ENCODE measurements at regions of chr5 and their contacts with region 1.

Region 1: DNA sequence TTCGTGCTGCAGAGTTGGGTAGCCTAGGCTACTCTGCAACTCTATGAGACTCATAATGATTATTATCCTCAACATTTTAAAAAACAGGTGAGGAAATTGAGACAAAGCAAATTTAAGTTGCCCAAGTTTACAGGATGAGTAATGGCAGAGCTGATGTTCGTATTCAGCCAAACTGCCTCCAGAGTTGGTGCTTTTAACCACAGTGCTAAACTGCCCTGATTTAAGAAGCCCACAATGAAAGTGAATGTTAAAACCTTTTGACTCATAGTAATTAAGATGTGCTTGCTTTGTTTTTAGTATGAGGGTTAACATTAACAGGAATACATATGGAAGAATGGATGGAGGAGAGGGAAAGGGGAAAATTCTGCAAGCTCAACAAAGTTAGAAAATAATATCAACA is 15.9 kb upstream of the GABRB2 start:
- DNase-seq: no peak

Region 2: GRCh38 chr5:160852049-160852448 is 710.4 kb before region 1 on chr5 and contains the start of gene ATP10B:
- intact Hi-C with region 1: loop called in 1 of 2 experiments (anchors 10 kb)
- DNase-seq: no peak
- total RNA-seq, gene ATP10B: not detected

Region 3: GRCh38 chr5:161544350-161544765 is 18.1 kb before region 1 on chr5:
- intact Hi-C with region 1: loop called in 1 of 2 experiments (anchors 1 kb)
- DNase-seq: no peak

Measured in posterior vena cava (tissue), 2 donors.